Right cardiac atrium (tissue), 5 donors: ENCODE measurements at regions of chr7 and their contacts with region 1.

Region 1: GRCh38 chr7:125061776-125062397 is 132.3 kb upstream of the POT1 start:
- DNase-seq: no peak
- ATAC-seq: peak in 1 of 2 donors; percentile 63
- H3K4me3 ChIP-seq: no peak overlapping the region
- H3K27ac ChIP-seq: no peak overlapping the region
- H3K4me1 ChIP-seq: no peaks in the 10 kb centered on the region
- H3K27me3 ChIP-seq: no peaks in the 10 kb centered on the region

Region 2: GRCh38 chr7:124874644-124875163 is 187.2 kb before region 1 on chr7:
- intact Hi-C with region 1: no loop called
- DNase-seq: no peak
- ATAC-seq: no peak
- H3K4me3 ChIP-seq: no peak overlapping the region
- H3K27ac ChIP-seq: no peak overlapping the region
- H3K4me1 ChIP-seq: no peaks in the 10 kb centered on the region
- H3K27me3 ChIP-seq: no peaks in the 10 kb centered on the region

Region 3: GRCh38 chr7:125316466-125316865 is 254.6 kb after region 1 on chr7:
- intact Hi-C with region 1: loop called in 1 of 4 experiments (anchors 10 kb)
- DNase-seq: no peak
- ATAC-seq: peak; percentile 42 to 72
- H3K4me3 ChIP-seq: no peak overlapping the region
- H3K27ac ChIP-seq: no peak overlapping the region
- H3K4me1 ChIP-seq: no peaks in the 10 kb centered on the region
- H3K27me3 ChIP-seq: no peaks in the 10 kb centered on the region

Region 4: DNA sequence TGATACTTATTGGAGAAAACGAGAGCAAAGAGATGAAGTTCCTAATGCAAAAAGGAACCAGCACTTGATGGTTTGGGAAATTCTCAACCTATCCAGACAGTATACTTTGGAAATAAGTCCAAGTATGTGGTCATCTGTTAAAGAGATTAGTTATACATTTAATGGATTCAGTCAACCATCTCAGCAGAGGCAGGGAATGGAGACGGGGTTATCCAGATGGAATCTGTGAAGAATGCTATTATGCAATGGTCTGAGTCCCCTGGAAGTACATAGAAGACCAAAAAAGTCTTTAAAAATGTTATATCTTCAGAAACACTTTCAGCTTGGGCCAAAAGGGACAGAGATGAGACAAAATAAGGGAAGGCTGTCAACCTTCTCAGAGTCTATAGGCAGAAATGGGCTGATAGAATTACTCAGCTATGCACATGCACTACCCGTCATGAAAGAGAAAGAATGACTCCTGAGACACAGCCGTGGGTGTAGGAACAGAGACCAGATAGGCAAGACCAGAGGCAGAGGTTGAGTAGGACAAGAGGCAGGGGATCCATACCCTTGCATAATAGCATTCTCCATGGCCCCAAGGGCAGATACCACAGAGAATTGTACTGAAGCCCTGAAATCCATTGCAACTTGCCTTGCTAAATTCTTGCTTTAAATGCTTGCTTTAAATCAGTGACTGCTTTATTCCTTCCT is 606.6 kb after region 1 on chr7:
- intact Hi-C with region 1: loop called in 1 of 4 experiments (anchors 5 kb)
- DNase-seq: no peak
- ATAC-seq: no peak
- H3K4me3 ChIP-seq: no peak overlapping the region
- H3K27ac ChIP-seq: no peak overlapping the region
- H3K4me1 ChIP-seq: no peaks in the 10 kb centered on the region
- H3K27me3 ChIP-seq: no peaks in the 10 kb centered on the region